Motor neuron (in vitro differentiated cells): ENCODE measurements at regions of chr1 and their contacts with region 1.

Region 1: GRCh38 chr1:198465201-198466144 is 75.0 kb downstream of the ATP6V1G3 start:
- ATAC-seq: peak in 7 of 8 experiments; percentile 42 to 75 (median 57)
- H3K4me3 ChIP-seq: no peak overlapping the region
- H3K27ac ChIP-seq: no peak overlapping the region
- H3K4me1 ChIP-seq: no peaks in the 10 kb centered on the region

Region 2: GRCh38 chr1:197327776-197328364 is 1137.6 kb before region 1 on chr1:
- in situ Hi-C with region 1: loop called in 1 of 9 experiments (anchors 25 kb)
- ATAC-seq: peak in 3 of 8 experiments; percentile 34 to 53 (median 41)
- H3K4me3 ChIP-seq: no peak overlapping the region
- H3K27ac ChIP-seq: no peak overlapping the region
- H3K4me1 ChIP-seq: peaks cover 1 to 8% of the 10 kb centered on the region in 2 donors

Region 3: DNA sequence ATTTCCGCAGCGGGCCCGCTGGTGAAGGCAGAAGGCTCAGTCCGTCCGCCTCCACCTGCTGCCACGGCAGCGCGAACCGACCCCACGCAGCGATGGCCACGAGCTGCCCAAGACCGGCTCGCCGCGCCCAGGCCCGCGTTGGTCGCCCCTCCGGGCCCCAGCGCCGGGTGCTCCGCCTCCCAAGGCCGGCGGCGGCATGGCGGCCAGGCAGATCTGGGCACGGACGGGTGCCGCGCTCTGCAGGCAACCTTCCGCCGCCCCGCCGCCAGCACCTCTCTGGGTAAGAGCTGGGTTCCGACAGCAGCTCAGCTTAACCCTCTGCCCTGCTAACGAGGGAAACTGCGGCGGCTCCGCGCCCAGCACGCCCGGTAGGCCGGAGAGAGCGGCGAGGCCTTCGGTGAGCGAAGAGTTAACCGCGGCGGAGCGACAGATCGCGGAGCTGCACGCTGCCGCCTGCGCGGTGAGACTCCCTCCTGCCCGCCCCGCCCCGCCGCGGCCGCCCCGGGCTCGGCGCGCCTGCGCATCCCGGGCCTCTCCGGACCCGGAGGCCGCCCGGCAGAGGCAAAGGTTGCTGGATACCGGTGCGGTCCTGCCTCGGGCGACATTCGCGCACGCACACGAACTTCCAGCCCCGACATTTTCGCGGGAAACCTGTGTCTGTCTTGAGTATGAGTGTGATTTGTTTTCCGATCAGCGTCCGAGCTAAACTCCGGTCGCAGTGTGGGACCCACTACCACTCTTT is 562.8 kb before region 1 on chr1 and contains the start of gene C1orf53:
- in situ Hi-C with region 1: loop called in 3 of 9 experiments (anchors 25 kb)
- ATAC-seq: peak; percentile 93 to 96 (median 95)
- H3K4me3 ChIP-seq: peak within 1 kb of the TSS; percentile 69 to 97 (median 77)
- H3K27ac ChIP-seq: peak within 1 kb of the TSS; percentile 89 to 95
- H3K4me1 ChIP-seq: peaks cover 8 to 9% of the 10 kb centered on the region in 2 donors
- total RNA-seq, gene C1orf53: 4.3 to 40.9 (median 10.1) TPM

Region 4: GRCh38 chr1:198088360-198089071 is 377.0 kb before region 1 on chr1:
- in situ Hi-C with region 1: loop called in 1 of 9 experiments (anchors 25 kb)
- ATAC-seq: peak in 2 of 8 experiments; percentile 34 to 37
- H3K4me3 ChIP-seq: no peak overlapping the region
- H3K27ac ChIP-seq: no peak overlapping the region
- H3K4me1 ChIP-seq: peaks cover 0 to 7% of the 10 kb centered on the region in 2 donors

Region 5: DNA sequence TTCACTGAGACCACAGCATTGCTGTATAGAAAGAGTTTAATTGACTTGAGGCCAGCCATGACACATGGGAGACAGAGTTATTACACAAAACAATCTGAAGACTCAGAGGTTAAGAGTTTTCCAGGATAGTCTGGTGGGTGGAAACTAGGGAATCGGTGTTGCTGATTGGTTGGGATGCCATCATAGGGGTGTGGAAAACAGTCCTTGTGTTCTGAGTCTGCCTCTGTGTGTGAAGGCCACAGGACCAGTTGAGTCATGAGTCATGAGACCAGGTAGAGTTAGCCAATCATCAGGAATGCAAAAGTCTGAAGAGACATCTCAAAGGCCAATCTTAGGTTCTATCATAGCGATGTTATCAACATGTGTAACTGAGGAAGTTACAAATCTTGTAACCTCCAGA is 358.4 kb before region 1 on chr1:
- in situ Hi-C with region 1: no loop called
- ATAC-seq: no peak
- H3K4me3 ChIP-seq: no peak overlapping the region
- H3K27ac ChIP-seq: no peak overlapping the region
- H3K4me1 ChIP-seq: no peaks in the 10 kb centered on the region

Region 6: DNA sequence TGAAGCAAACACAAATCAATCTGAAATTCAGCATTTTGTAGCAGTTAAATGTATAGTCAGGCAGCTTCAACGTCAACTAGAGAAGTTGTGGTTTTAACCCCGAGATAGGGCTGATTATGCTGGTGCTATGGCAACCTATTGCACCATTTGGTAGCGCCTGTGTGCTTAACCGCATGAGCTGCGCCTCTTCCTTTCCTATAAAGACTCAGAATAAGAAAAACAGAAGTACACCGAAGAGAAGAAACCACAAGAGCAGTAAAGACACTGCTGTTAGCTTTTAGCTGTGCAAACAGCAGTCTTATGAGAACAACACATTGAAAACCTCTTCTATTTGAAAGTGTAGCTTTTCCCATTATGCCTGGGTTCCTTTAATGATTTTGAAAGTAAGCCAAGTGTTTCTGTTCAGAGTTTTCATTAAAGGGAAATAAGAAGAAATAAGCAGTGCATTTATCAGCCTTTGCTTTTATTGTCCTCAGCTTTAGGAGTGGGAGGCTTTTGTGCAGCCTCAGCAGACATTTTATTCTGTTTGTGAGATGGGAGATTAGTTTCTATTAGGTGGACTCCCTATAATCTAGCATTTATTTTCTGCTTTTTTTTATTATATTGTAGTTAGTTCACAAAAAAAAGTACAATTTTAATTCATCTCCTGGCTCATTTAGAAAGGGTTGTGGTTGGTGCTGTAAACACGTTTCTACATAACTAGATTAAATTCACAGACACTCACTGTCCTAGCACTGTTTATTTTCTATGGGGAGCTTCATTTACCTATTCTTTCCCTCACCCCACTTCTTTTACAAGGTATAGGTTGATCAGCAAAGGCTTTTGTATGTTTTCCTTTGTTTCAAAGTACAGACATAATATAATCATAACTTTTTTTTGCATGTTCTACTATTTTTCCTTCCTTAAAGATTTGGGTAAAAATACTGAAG is 216.6 kb after region 1 on chr1:
- in situ Hi-C with region 1: loop called in 2 of 9 experiments (anchors 10 to 25 kb)
- ATAC-seq: peak; percentile 83 to 98 (median 92)
- H3K4me3 ChIP-seq: peak overlapping the region in 1 of 5 donors; percentile 0
- H3K27ac ChIP-seq: peak overlapping the region; percentile 21 to 35
- H3K4me1 ChIP-seq: peaks cover 28 to 44% of the 10 kb centered on the region in 2 donors

Region 7: GRCh38 chr1:198922638-198923430 is 457.4 kb after region 1 on chr1:
- in situ Hi-C with region 1: no loop called
- ATAC-seq: no peak
- H3K4me3 ChIP-seq: no peak overlapping the region
- H3K27ac ChIP-seq: no peak overlapping the region
- H3K4me1 ChIP-seq: no peaks in the 10 kb centered on the region